CD4-positive, alpha-beta memory T cell (primary cell): ENCODE measurements at regions of chr10 and their contacts with region 1.

Region 1: GRCh38 chr10:14878266-14879054 is at the start of gene SUV39H2:
- DNase-seq: peak; percentile 87 to 91 (median 90)
- H3K4me3 ChIP-seq: peak within 1 kb of the TSS; percentile 44 to 88
- H3K4me3 Mint-ChIP-seq: peak within 1 kb of the TSS; percentile 93 to 96 (median 94)
- H3K27ac ChIP-seq: peak within 1 kb of the TSS; percentile 84
- H3K27ac Mint-ChIP-seq: peak within 1 kb of the TSS; percentile 87 to 95 (median 94)
- H3K4me1 ChIP-seq: peaks cover 17% of the 10 kb centered on the region
- H3K4me1 Mint-ChIP-seq: peaks cover 13 to 48% (median 22%) of the 10 kb centered on the region in 4 donors
- H3K27me3 ChIP-seq: no peaks in the 10 kb centered on the region
- H3K27me3 Mint-ChIP-seq: no peaks in the 10 kb centered on the region
- total RNA-seq, gene SUV39H2: 5.0 to 5.7 TPM

Region 2: GRCh38 chr10:14959276-14960057 is 81.0 kb after region 1 on chr10 and contains the start of gene MEIG1:
- CTCF ChIA-PET with region 1: interaction called, 4 read pairs
- POLR2A ChIA-PET with region 1: interaction called, 20 read pairs
- intact Hi-C with region 1: loop called (anchors 2 kb)
- DNase-seq: peak; percentile 87 to 92 (median 88)
- H3K4me3 ChIP-seq: peak within 1 kb of the TSS; percentile 79 to 98
- H3K4me3 Mint-ChIP-seq: peak within 1 kb of the TSS; percentile 93 to 99 (median 96)
- H3K27ac ChIP-seq: peak within 1 kb of the TSS; percentile 92
- H3K27ac Mint-ChIP-seq: peak within 1 kb of the TSS; percentile 93 to 99 (median 96)
- H3K4me1 ChIP-seq: peaks cover 14% of the 10 kb centered on the region
- H3K4me1 Mint-ChIP-seq: peaks cover 20 to 40% (median 29%) of the 10 kb centered on the region in 4 donors
- H3K27me3 ChIP-seq: no peaks in the 10 kb centered on the region
- H3K27me3 Mint-ChIP-seq: no peaks in the 10 kb centered on the region
- total RNA-seq, gene MEIG1: not detected

Region 3: DNA sequence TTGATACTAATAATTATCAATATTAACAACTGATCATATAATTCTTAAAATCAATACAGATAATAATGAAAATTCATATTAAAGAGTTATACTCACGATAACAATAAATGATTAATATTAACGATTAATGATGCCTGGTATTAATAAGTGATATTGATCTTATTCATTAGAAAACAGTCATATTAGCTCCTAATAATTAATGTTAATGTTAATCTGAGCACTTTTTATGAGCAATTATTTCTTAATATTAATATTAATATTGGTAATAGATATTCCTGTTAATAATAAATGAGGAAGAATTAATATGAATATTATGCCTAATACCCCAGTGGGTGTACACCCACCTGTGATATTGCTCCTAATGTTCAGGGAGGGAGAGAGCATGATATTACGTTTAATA is 104.3 kb after region 1 on chr10:
- CTCF ChIA-PET with region 1: no interaction called
- POLR2A ChIA-PET with region 1: no interaction called
- intact Hi-C with region 1: no loop called
- DNase-seq: no peak
- H3K4me3 ChIP-seq: no peak overlapping the region
- H3K4me3 Mint-ChIP-seq: no peak overlapping the region
- H3K27ac ChIP-seq: no peak overlapping the region
- H3K27ac Mint-ChIP-seq: no peak overlapping the region
- H3K4me1 ChIP-seq: no peaks in the 10 kb centered on the region
- H3K4me1 Mint-ChIP-seq: no peaks in the 10 kb centered on the region
- H3K27me3 ChIP-seq: no peaks in the 10 kb centered on the region
- H3K27me3 Mint-ChIP-seq: peaks cover 0 to 9% of the 10 kb centered on the region in 2 donors

Region 4: DNA sequence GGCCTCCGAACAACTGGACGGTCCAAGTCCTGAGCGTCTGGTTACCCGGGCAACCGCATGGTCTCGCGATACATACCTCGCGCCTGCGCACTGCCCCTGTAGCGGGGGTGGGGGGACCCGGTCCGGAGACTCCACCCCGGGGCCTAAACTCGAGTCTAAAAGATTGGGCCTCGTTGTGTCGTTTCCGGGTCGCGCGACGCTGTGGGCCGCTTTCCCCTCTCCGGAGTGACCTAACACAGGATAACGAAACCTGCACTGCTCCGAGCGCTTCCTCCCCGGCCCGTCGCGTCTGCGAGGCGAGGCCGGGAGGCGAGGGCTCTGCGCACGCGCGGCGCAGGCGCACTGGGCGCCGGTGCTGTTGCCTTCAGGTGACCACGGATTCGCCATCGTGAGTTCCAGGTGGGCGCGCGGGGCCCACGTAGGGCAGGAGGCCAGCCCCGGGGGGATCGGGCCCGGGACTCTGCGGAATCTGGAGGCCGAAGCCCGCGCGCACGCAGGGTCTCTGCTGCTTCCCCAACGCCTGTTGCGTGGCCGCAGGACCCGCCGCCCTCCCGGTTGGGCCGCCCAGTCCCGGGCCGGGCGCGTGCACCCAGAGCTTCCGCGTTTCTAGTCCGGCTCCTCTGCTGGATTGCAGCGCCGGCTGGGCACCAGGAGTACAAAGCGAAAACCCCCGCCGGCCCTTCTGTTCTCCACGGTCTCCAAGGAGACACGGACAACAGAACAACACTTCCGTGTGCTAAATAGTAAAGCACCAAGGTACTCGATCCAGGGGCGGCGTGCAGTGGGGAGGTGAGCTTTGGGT is 218.8 kb after region 1 on chr10 and contains the start of gene RPP38:
- CTCF ChIA-PET with region 1: no interaction called
- POLR2A ChIA-PET with region 1: interaction called, 6 read pairs
- intact Hi-C with region 1: loop called (anchors 2 kb)
- DNase-seq: peak; percentile 94 to 97 (median 95)
- H3K4me3 ChIP-seq: peak within 1 kb of the TSS; percentile 86 to 97
- H3K4me3 Mint-ChIP-seq: peak within 1 kb of the TSS; percentile 91 to 99 (median 96)
- H3K27ac ChIP-seq: peak within 1 kb of the TSS; percentile 95
- H3K27ac Mint-ChIP-seq: peak within 1 kb of the TSS; percentile 94 to 99 (median 98)
- H3K4me1 ChIP-seq: peaks cover 38% of the 10 kb centered on the region
- H3K4me1 Mint-ChIP-seq: peaks cover 16 to 44% (median 31%) of the 10 kb centered on the region in 4 donors
- H3K27me3 ChIP-seq: no peaks in the 10 kb centered on the region
- H3K27me3 Mint-ChIP-seq: no peaks in the 10 kb centered on the region
- total RNA-seq, gene RPP38: 19.8 to 21.8 TPM